Sigmoid colon (tissue), 7 donors: ENCODE measurements at regions of chr10 and their contacts with region 1.

Region 1: DNA sequence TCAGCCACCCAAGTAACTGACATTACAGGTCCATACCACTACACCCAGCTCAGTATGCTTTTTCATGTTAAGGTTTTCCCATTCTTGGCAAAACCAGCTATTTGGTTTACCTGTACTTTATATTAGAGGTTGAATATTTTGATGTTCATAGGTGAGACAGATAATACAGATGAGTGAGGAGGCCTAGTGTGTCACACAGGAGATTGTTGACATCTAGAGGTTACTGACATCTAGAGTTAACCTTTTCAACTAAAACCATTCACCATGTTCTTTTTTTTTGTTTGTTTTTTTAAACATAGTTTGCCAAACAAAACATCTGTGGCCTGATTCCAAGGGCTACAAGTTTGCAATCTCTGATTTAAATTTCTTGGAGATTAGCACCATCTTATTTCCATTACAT is 8.0 kb downstream of the GHITM start:
- DNase-seq: no peak
- H3K4me3 ChIP-seq: no peak overlapping the region
- H3K27ac ChIP-seq: no peak overlapping the region
- H3K4me1 ChIP-seq: no peaks in the 10 kb centered on the region
- H3K27me3 ChIP-seq: no peaks in the 10 kb centered on the region
- CTCF ChIP-seq: no peak
- EP300 ChIP-seq: no peak
- POLR2A ChIP-seq: no peak

Region 2: DNA sequence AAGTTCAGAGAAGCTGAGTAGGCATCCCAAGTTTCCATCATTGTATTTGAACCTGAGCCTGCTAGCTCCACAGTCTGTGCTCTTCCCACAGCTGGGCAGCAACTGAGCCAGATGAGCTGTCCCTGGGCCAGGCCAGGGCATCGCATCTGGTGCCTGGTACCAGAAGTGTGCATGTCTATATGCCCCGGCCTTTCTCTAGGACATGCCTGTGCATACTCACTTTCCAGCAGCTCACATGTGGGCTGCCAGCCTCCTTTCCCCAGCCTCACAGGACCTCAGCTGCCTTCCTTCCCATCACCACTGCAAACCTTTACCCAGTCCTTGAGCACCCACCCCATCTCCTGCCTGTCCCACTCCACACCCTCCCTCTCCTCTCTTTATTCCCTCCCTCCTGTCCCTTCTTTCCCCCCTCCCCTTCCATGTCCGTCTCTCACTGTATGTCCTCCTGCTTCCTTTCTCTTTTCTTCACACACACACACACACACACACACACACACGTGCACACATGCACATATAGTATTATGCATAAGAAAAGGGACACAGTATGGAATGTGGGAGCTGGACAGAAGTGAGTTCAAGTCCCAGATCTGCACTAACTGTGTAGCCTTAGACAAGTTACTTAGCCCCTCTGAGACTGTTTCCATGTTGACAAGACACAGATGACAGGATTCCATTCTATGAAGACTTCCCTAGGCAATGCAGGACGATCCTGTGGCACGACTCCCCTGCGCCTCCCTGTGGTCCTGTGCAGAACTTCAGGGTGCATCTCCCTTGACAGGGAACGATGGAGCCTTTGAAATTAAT is 57.9 kb after region 1 on chr10:
- intact Hi-C with region 1: loop called (anchors 2 kb)
- DNase-seq: no peak
- H3K4me3 ChIP-seq: no peak overlapping the region
- H3K27ac ChIP-seq: no peak overlapping the region
- H3K4me1 ChIP-seq: no peaks in the 10 kb centered on the region
- H3K27me3 ChIP-seq: peaks cover 0 to 4% (median 0%) of the 10 kb centered on the region in 3 donors
- CTCF ChIP-seq: peak; percentile 21 to 67 (median 60)
- EP300 ChIP-seq: no peak
- POLR2A ChIP-seq: no peak

Region 3: DNA sequence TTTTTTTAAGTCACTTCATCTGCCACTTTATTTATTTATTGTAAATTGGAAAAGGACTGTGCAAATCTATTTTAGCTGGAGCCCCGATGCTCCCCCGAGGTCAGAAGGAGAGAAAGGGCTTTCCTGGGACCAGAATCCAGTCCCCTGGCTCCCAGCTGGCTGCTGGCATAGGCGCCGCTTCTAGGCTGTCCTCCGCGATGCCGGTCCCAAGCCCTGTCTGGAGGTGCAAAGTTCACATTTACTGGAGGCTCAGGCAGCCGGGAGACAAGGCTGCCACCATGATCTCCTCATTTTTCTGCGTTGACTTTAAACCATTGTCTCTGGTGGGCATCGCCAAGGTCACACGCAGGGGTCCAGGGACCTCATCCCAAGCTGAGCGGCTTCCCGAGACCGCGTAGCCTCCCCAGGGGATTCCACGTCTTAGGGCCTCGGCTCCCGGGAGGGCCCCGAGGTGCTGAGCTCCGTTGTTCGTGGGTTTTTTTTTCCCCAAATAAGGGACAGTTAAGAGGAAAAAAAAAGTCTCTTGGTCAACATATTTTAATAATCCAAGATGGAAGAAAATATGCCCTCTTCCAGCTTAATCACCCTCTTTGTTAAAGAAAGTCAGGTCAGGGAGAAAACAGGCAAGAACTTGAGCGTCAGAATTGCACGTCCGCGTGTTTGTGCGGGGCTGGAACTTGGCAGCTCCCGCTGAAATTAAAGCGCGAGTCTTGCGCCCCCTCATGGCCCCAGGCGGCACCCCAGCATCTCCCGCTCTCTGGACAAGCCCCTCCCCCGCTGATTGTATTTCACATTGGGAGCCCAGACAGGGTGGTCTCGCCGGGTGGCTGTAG is 109.4 kb after region 1 on chr10:
- intact Hi-C with region 1: loop called (anchors 5 kb)
- DNase-seq: no peak
- H3K4me3 ChIP-seq: no peak overlapping the region
- H3K27ac ChIP-seq: no peak overlapping the region
- H3K4me1 ChIP-seq: no peaks in the 10 kb centered on the region
- H3K27me3 ChIP-seq: peaks cover 0 to 15% (median 7%) of the 10 kb centered on the region in 3 donors
- CTCF ChIP-seq: peak in 1 of 4 experiments; percentile 38
- EP300 ChIP-seq: no peak
- POLR2A ChIP-seq: no peak